ENCODE measurements at regions of chr18 and their contacts with region 1.

Region 1: DNA sequence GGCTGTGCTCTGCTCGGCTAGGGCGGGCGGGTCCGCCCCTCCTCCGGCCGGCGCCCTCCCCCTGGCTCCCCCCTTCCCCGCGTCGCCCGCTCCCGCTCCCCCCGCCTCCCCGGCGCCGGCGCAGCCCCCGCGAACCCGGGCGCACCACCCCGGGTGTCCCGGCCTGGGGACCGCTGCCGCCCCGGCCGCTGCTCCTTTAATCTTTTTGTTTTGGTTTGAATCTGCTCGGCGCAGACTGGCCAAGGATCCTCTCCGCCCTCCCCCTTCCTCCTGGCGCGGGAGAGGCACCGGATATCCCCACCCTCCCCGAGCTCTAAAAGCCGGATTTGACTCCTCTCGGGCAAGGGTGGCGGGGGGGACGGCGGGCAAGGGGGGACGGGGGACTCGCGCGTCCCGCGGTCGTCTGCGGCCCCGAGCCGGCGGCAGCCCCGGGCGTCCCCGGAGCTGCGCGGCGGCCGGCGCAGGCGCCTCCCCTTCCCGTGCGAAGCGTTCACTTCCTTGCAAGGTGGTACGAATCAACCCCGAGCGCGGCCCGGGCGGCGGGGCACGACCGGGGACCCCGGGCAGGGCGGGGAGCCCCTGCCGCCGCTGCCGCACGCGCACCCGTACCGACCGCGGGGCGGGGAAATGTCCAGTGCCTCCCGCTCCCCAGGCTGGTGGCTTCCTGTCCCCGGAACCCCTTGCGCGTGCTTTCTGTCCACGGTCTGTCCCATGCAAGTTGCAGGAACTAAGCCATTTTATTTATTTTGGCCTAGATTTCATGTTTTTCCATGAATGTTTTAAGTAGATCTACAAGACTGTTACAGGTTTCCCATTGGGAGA is at the start of gene PTGR3:
- DNase-seq: peak; percentile 96
- total RNA-seq, gene PTGR3: 13.7 to 15.8 TPM

Region 2: DNA sequence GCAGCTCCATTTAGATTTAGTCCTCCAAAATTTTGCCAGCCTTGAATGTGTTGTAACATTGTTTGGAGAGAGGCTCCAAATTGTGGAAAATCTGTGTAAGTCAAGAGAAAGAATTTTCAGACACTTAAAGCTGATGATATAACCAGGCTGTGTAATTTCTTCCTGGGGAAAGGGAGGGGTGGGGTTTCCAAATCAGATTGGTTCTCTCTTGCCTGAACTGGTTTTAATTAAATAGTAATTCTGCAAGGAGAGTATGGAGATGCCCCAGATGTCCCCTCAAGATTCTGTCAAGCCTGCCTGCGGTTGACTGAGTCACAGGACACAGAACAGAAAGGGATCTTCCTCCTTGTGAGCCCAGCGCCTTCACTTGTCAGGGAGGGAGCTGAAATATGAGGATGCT is 839.2 kb before region 1 on chr18:
- intact Hi-C with region 1: no loop called
- DNase-seq: no peak

Region 3: GRCh38 chr18:75247611-75248421 is 38.5 kb after region 1 on chr18:
- intact Hi-C with region 1: loop called in 1 of 2 experiments (anchors 2 kb)
- DNase-seq: no peak

Region 4: DNA sequence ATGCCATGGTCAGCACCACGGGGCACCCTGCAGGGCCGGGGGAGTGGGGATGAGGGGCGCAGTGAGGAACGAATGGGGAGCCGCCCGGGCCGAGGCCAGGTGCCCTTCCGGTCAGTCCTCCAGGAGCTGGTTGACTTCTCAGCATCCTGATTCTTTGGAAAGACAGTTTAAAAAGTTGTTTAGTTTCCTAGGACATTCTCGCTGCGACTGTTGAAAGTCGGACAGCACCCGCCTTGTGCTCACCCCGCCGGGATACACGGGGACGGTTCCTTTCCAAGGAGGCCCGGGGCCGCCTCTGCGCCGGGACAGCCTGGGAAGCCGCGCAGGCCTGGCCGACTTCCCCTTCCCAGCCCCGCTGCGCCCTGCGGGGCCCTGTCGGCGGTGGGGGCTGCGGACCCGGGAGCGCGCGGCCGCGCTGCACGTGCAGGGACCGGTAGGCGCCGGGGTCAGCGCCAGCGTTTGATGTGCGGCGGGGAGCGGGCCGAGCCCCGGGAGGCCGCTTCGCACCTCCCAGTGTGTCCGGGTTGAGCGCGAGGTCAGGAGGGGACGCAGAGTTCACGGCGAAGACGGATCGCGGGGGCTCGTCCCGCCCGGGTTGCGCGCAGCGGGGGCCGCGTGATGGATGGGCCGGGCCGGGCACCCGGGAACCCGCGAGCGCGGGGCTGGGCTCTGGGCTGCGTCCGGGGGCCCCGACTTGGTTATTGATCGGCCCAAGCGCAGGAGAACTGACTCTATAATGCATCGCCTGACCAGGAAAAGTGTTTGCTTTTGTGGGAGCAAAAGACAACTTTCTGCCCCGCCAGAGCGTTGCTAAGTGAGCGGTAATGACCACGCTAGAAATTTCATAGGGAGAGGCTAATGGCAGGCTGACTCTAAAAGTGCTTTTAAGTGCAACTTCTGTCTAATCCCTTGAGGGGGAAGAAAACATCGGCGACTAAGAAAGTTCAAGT is 246.2 kb after region 1 on chr18:
- intact Hi-C with region 1: loop called in 1 of 2 experiments (anchors 10 kb)
- DNase-seq: no peak

Measured in posterior vena cava (tissue), 2 donors.